CD4-positive, alpha-beta memory T cell (primary cell): ENCODE measurements at regions of chr5 and their contacts with region 1.

Region 1: GRCh38 chr5:132500931-132501630 is 10.5 kb upstream of the IRF1 start:
- DNase-seq: peak; percentile 75 to 80 (median 76)
- H3K4me3 ChIP-seq: no peak overlapping the region
- H3K4me3 Mint-ChIP-seq: peak overlapping the region in 1 of 8 donors; percentile 0
- H3K27ac ChIP-seq: peak overlapping the region; percentile 18
- H3K27ac Mint-ChIP-seq: peak overlapping the region in 6 of 7 donors; percentile 13 to 97 (median 58)
- H3K4me1 ChIP-seq: peaks cover 44% of the 10 kb centered on the region
- H3K4me1 Mint-ChIP-seq: peaks cover 19 to 50% (median 36%) of the 10 kb centered on the region in 4 donors
- H3K27me3 ChIP-seq: no peaks in the 10 kb centered on the region
- H3K27me3 Mint-ChIP-seq: peaks cover 1 to 2% of the 10 kb centered on the region in 2 donors

Region 2: DNA sequence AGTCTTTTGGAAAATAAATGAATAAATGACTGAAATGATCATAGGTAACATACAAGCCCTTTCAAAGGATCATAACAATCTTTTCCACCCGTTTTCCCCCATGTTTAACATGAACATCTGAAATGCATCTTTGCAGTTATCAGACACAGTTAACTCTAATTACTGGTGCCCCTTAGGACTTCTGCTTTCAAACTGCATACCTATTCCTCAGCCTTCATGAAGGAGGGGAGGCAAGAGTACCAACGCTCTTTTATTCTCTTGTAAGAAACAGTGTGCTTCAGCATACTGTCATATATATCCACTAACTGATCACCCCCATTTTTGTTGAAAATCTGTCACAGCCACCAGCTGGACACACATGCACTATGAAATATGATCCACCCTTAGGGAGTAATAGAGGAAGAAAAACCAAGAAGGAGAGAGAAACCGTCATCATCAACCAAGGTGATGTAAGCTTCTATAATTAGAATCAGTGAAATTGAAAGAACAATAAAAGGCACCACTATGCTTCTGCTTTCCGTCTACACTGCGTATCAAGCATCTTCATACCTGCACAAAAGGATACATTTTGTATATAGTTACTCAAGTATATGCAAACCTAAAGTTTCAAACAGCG is 964.8 kb before region 1 on chr5:
- CTCF ChIA-PET with region 1: no interaction called
- POLR2A ChIA-PET with region 1: no interaction called
- intact Hi-C with region 1: no loop called
- DNase-seq: peak in 2 of 5 donors; percentile 35 to 45
- H3K4me3 ChIP-seq: no peak overlapping the region
- H3K4me3 Mint-ChIP-seq: peak overlapping the region in 7 of 8 donors; percentile 39 to 83 (median 69)
- H3K27ac ChIP-seq: peak overlapping the region; percentile 35
- H3K27ac Mint-ChIP-seq: peak overlapping the region; percentile 66 to 96 (median 81)
- H3K4me1 ChIP-seq: peaks cover 93% of the 10 kb centered on the region
- H3K4me1 Mint-ChIP-seq: peaks cover 64 to 85% (median 73%) of the 10 kb centered on the region in 4 donors
- H3K27me3 ChIP-seq: no peaks in the 10 kb centered on the region
- H3K27me3 Mint-ChIP-seq: no peaks in the 10 kb centered on the region

Region 3: DNA sequence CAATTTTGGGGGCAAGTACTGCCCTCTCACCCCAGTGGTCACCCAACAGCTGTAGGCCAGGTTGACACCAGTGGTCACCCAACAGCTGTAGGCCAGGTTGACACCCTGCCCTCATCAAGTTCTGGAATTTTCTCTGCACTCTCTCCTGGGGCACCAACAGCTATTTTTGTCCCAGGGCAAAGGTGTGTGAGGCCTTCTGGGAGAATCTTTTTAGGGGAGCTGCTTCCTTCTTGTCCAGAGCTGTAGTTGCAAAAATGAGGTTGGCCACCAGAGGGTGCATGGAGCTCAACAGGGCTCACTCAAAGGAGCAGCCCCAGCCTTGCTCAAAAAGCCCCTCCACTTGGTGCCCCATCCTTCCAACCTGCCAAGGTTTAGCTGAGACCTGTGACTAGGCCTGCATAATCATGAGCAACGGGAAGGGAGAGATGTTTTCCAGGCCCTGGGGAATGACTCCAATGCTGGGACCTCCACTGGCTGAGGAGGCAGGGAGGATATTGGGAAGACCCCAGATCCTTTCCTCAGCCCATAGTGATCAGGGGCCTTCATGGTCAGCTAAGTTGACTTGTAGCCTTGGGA is 262.8 kb before region 1 on chr5:
- CTCF ChIA-PET with region 1: interaction called, 26 read pairs
- POLR2A ChIA-PET with region 1: no interaction called
- intact Hi-C with region 1: no loop called
- DNase-seq: peak; percentile 40 to 57 (median 52)
- H3K4me3 ChIP-seq: no peak overlapping the region
- H3K4me3 Mint-ChIP-seq: no peak overlapping the region
- H3K27ac ChIP-seq: no peak overlapping the region
- H3K27ac Mint-ChIP-seq: no peak overlapping the region
- H3K4me1 ChIP-seq: no peaks in the 10 kb centered on the region
- H3K4me1 Mint-ChIP-seq: no peaks in the 10 kb centered on the region
- H3K27me3 ChIP-seq: no peaks in the 10 kb centered on the region
- H3K27me3 Mint-ChIP-seq: peaks cover 7% of the 10 kb centered on the region in 2 donors

Region 4: DNA sequence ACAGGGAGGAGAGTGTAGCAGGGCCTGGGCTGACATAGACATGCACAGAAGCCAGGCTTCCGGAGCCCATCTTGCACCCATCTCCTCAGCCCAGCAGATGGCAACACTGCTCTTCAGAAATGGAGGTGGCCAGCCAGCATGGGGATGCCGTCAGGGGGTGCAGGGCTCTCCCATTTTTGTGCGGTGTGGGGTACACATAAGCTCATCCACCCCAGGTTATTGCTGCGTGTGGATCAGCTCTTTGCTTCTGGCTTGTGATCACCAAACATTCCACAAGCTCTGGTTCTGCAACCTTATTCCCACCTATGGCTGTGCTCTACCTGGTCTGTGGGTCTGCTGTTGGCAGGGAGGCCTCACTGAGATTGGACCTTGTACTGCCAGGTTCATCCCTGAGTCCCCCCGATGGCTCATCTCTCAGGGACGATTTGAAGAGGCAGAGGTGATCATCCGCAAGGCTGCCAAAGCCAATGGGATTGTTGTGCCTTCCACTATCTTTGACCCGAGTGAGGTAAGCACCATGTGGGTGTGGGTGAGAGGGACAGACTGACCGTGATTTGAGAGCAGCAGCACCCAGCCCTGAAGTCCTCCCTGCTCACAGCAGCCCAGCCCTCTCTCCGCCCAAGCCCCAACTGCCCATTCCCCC is 114.3 kb before region 1 on chr5:
- CTCF ChIA-PET with region 1: interaction called, 543 read pairs
- POLR2A ChIA-PET with region 1: interaction called, 151 read pairs
- intact Hi-C with region 1: loop called (anchors 1 kb)
- DNase-seq: peak; percentile 75 to 80 (median 78)
- H3K4me3 ChIP-seq: no peak overlapping the region
- H3K4me3 Mint-ChIP-seq: peak overlapping the region in 1 of 8 donors; percentile 36
- H3K27ac ChIP-seq: no peak overlapping the region
- H3K27ac Mint-ChIP-seq: peak overlapping the region; percentile 22 to 88 (median 31)
- H3K4me1 ChIP-seq: peaks cover 20% of the 10 kb centered on the region
- H3K4me1 Mint-ChIP-seq: peaks cover 20 to 53% (median 33%) of the 10 kb centered on the region in 4 donors
- H3K27me3 ChIP-seq: no peaks in the 10 kb centered on the region
- H3K27me3 Mint-ChIP-seq: no peaks in the 10 kb centered on the region

Region 5: DNA sequence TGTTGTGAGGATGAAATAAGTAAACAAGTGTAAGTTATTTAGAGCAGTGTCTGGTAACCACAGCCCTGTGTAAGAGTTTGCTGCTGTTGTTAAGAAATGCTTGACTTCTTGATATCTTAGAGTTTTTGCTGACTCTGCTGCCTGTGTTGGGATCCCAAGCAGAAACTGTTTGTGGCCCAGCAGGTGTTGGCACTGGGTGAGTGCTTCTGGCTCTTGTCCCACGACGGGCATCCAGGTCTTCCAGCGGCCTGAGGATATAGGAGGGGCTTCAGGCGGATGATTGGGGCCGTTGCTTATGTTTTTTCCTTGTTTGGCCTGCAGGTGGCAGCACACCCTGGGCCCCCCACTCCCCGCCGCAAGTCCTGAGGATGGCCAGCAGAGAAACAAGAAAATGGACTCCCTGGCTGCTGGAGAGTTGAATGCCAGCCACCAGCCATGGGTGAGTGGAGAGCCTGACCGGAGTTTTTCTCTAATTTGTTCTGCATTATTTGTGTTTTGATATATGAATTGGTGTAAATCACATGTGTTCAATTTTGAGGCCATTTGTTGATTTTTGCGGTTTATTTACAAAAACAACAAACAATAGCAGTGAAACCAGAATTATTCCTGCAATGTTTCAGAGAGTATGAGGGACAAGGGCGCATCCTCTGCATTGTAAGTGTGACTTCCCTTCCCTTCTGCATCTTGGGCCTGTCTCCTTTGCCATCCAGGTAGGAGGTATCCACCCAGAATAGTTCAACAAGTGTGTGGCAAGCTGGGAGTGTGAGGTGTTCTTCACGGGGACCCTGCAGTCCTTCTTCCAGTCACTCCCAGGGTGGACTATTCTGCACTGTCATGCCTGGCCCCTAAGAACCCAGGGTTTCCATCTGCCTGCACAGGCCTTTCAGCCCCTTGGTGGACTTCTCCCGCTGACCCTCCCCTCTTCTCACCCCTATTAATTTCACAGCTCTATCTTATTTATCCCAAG is 81.3 kb before region 1 on chr5:
- CTCF ChIA-PET with region 1: interaction called, 80 read pairs
- POLR2A ChIA-PET with region 1: interaction called, 565 read pairs
- intact Hi-C with region 1: loop called (anchors 1 kb)
- DNase-seq: peak; percentile 57 to 69 (median 64)
- H3K4me3 ChIP-seq: peak overlapping the region; percentile 38 to 51
- H3K4me3 Mint-ChIP-seq: peak overlapping the region; percentile 75 to 93 (median 80)
- H3K27ac ChIP-seq: peak overlapping the region; percentile 71
- H3K27ac Mint-ChIP-seq: peak overlapping the region; percentile 96 to 99 (median 97)
- H3K4me1 ChIP-seq: peaks cover 100% of the 10 kb centered on the region
- H3K4me1 Mint-ChIP-seq: peaks cover 76 to 98% (median 86%) of the 10 kb centered on the region in 4 donors
- H3K27me3 ChIP-seq: no peaks in the 10 kb centered on the region
- H3K27me3 Mint-ChIP-seq: no peaks in the 10 kb centered on the region

Region 6: GRCh38 chr5:132456296-132457001 is 44.6 kb before region 1 on chr5:
- CTCF ChIA-PET with region 1: interaction called, 13 read pairs
- POLR2A ChIA-PET with region 1: interaction called, 1,580 read pairs
- intact Hi-C with region 1: no loop called
- DNase-seq: peak; percentile 76 to 87 (median 79)
- H3K4me3 ChIP-seq: peak overlapping the region; percentile 41 to 48
- H3K4me3 Mint-ChIP-seq: peak overlapping the region; percentile 73 to 89 (median 82)
- H3K27ac ChIP-seq: peak overlapping the region; percentile 77
- H3K27ac Mint-ChIP-seq: peak overlapping the region; percentile 97 to 100 (median 100)
- H3K4me1 ChIP-seq: peaks cover 100% of the 10 kb centered on the region
- H3K4me1 Mint-ChIP-seq: peaks cover 82 to 95% (median 90%) of the 10 kb centered on the region in 4 donors
- H3K27me3 ChIP-seq: no peaks in the 10 kb centered on the region
- H3K27me3 Mint-ChIP-seq: no peaks in the 10 kb centered on the region

Region 7: DNA sequence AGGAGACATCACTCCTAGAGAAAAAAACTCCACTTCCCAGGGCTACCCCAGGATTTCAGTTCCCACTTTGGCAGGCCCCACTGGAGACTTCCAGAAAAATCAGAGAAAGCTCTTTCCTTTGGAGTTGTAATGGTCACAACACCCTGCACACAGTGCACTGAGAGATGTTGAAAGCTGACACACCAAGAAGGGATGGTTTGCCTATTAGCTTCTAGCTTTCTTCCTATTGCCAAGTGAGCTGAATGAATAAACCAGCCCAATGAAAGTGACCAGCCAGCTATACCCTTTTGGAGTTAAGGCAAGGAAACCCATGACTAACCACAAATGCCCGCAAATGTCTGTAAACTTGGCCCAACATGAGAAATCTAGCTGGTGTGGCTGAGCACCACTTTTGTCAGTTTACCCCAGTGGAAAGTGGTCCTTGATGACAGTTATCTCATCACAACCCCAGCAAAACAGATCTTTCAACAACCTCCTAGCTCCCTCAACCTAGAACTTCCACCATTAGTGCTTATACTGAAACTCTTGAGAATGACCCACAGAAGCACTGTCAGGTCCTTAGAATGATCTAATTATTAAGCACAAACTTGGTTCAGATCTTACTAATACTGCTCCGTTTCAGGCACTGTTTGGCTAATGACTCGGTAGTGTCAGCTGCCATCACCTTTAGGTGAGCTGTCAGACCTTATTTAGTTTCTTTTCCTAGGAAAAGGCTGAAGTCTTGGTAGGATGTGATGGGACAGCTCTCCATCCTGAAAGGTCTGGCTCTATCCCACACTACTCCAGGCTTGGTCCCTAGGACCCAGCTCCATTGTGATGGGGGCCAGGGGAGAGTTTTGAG is 21.8 kb before region 1 on chr5:
- CTCF ChIA-PET with region 1: interaction called, 30 read pairs
- POLR2A ChIA-PET with region 1: interaction called, 1,580 read pairs
- intact Hi-C with region 1: no loop called
- DNase-seq: peak in 4 of 5 donors; percentile 24 to 39 (median 30)
- H3K4me3 ChIP-seq: no peak overlapping the region
- H3K4me3 Mint-ChIP-seq: peak overlapping the region in 2 of 8 donors; percentile 30 to 44
- H3K27ac ChIP-seq: peak overlapping the region; percentile 37
- H3K27ac Mint-ChIP-seq: peak overlapping the region; percentile 82 to 97 (median 90)
- H3K4me1 ChIP-seq: peaks cover 92% of the 10 kb centered on the region
- H3K4me1 Mint-ChIP-seq: peaks cover 39 to 94% (median 69%) of the 10 kb centered on the region in 4 donors
- H3K27me3 ChIP-seq: no peaks in the 10 kb centered on the region
- H3K27me3 Mint-ChIP-seq: no peaks in the 10 kb centered on the region

Region 8: DNA sequence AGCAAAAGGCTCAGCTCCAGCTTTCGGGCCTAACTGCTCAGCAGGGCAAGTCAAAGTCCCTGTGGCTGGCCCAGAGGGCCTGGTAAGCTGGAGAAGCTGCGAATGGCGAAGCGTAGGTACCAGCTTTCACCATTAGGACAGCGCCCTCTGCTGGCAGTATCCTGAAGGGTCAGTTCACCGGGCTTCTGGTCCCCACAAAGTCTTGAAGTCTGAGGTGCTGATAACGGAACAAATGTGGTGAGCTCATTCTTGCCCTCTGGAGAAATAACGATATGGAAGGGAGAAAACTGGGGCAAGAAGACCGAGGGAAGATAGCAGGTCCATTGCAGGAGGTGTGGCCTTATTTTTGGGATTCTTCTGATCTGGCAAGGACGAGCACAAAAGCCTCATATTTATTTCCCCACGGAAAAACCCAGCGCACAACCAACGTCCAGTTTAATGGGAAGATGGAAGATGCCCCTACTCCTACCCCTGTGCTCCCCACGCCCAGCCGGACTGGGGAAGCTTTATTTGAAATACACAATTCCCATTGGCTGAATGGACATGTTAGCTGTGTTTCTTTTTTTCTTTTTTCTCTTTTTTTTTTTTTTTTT is 319.2 kb after region 1 on chr5:
- CTCF ChIA-PET with region 1: interaction called, 7 read pairs
- POLR2A ChIA-PET with region 1: no interaction called
- intact Hi-C with region 1: loop called (anchors 2 kb)
- DNase-seq: peak; percentile 78 to 84 (median 81)
- H3K4me3 ChIP-seq: no peak overlapping the region
- H3K4me3 Mint-ChIP-seq: peak overlapping the region in 5 of 8 donors; percentile 6 to 69 (median 49)
- H3K27ac ChIP-seq: no peak overlapping the region
- H3K27ac Mint-ChIP-seq: peak overlapping the region in 2 of 7 donors; percentile 3 to 51
- H3K4me1 ChIP-seq: peaks cover 11% of the 10 kb centered on the region
- H3K4me1 Mint-ChIP-seq: peaks cover 2 to 14% (median 7%) of the 10 kb centered on the region in 4 donors
- H3K27me3 ChIP-seq: peaks cover 15% of the 10 kb centered on the region
- H3K27me3 Mint-ChIP-seq: peaks cover 15 to 17% of the 10 kb centered on the region in 2 donors